Activated CD8-positive, alpha-beta memory T cell treated with anti-CD3 and anti-CD28 coated beads, Interleukin-2, amount 10 ng/mL, durations not matched to agents 7 days and 5 days (primary cell): ENCODE measurements at regions of chr19 and their contacts with region 1.

Region 1: DNA sequence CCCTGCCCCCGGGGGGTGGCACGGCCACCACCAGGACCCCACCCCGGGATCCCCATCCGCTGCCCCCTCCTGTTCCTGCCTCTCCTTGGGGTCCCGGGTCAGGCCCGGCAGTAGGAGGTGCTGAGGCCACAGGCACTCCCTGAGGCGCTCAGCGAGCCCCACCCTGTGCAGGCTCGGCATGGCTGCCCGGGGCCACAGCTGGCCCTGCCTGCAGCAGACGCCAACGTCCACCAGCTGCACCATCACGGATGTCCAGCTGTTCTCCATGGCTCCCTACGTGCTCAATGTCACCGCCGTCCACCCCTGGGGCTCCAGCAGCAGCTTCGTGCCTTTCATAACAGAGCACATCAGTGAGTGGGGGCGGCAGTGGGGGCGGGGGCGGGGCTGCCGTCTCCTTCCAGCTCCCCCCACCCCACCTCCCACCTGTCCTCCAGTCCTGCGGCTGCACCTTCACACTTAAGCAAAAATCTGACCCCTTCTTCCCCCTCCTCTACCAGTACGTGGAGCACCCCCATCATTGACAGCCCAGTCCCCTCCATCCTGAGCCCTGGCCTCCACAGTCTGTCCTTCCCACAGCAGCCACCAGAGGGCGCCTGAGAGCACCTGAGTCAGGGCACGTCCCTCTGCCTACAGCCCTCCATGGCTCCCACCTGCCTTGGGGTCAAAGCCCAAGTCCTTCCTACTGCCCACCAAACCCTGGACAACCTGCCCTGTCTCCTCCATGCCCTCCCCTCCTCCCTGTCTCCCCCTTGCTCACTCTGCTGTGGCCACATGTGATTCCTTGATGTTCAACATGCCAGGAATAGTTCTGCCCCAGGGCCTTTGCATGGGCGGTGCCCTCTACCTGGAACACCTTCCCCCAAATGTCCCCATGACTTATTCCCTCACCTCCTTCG is 3.9 kb downstream of the EBI3 start:
- DNase-seq: peak; percentile 85
- ATAC-seq: peak; percentile 65
- H3K4me3 Mint-ChIP-seq: no peak overlapping the region
- H3K27ac Mint-ChIP-seq: no peak overlapping the region
- H3K4me1 Mint-ChIP-seq: peaks cover 8% of the 10 kb centered on the region
- H3K27me3 Mint-ChIP-seq: no peaks in the 10 kb centered on the region

Region 2: GRCh38 chr19:4217429-4218264 is 15.6 kb before region 1 on chr19:
- CTCF ChIA-PET with region 1: interaction called, 14 read pairs
- DNase-seq: no peak
- ATAC-seq: no peak
- H3K4me3 Mint-ChIP-seq: no peak overlapping the region
- H3K27ac Mint-ChIP-seq: no peak overlapping the region
- H3K4me1 Mint-ChIP-seq: peaks cover 10% of the 10 kb centered on the region
- H3K27me3 Mint-ChIP-seq: no peaks in the 10 kb centered on the region

Region 3: GRCh38 chr19:4246767-4247593 is 13.8 kb after region 1 on chr19 and contains the start of gene YJU2:
- CTCF ChIA-PET with region 1: interaction called, 10 read pairs
- DNase-seq: peak; percentile 99
- ATAC-seq: peak; percentile 98
- H3K4me3 Mint-ChIP-seq: peak within 1 kb of the TSS; percentile 85
- H3K27ac Mint-ChIP-seq: peak within 1 kb of the TSS; percentile 97
- H3K4me1 Mint-ChIP-seq: peaks cover 21% of the 10 kb centered on the region
- H3K27me3 Mint-ChIP-seq: no peaks in the 10 kb centered on the region
- total RNA-seq, gene YJU2: 26.8 to 32.1 TPM

Region 4: GRCh38 chr19:4257025-4257424 is 23.8 kb after region 1 on chr19:
- CTCF ChIA-PET with region 1: no interaction called
- DNase-seq: no peak
- ATAC-seq: no peak
- H3K4me3 Mint-ChIP-seq: no peak overlapping the region
- H3K27ac Mint-ChIP-seq: no peak overlapping the region
- H3K4me1 Mint-ChIP-seq: no peaks in the 10 kb centered on the region
- H3K27me3 Mint-ChIP-seq: no peaks in the 10 kb centered on the region

Region 5: DNA sequence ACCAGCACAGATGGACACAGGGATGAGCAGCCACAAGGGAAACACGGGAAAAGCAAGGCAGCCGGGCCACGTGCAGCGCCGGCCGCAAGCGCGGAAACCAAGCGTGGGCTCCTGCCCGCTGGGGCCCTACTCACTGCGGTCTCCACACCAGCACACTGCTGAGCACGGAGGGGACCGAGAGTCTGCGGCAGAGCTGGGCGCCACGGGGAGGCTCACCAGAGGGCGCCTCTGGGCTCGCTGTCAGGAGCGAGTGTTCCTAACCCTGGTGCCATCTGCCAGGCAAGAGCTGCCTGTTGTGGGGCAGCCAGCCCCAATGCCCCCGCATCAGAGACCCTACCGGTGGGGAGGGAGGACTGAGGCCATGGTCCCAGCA is 136.7 kb after region 1 on chr19:
- CTCF ChIA-PET with region 1: no interaction called
- DNase-seq: peak; percentile 89
- ATAC-seq: peak; percentile 80
- H3K4me3 Mint-ChIP-seq: peak overlapping the region; percentile 66
- H3K27ac Mint-ChIP-seq: peak overlapping the region; percentile 93
- H3K4me1 Mint-ChIP-seq: peaks cover 60% of the 10 kb centered on the region
- H3K27me3 Mint-ChIP-seq: no peaks in the 10 kb centered on the region